ENCODE measurements at regions of chr4 and their contacts with region 1.

Region 1: GRCh38 chr4:138090150-138090917 is 151.8 kb downstream of the SLC7A11 start:
- DNase-seq: peak; percentile 46 to 60
- H3K4me3 ChIP-seq: peak overlapping the region in 1 of 3 donors; percentile 2
- H3K27ac ChIP-seq: no peak overlapping the region
- H3K4me1 ChIP-seq: no peaks in the 10 kb centered on the region
- H3K27me3 ChIP-seq: no peaks in the 10 kb centered on the region
- CTCF ChIP-seq: peak; percentile 61 to 86 (median 76)
- POLR2A ChIP-seq: no peak

Region 2: DNA sequence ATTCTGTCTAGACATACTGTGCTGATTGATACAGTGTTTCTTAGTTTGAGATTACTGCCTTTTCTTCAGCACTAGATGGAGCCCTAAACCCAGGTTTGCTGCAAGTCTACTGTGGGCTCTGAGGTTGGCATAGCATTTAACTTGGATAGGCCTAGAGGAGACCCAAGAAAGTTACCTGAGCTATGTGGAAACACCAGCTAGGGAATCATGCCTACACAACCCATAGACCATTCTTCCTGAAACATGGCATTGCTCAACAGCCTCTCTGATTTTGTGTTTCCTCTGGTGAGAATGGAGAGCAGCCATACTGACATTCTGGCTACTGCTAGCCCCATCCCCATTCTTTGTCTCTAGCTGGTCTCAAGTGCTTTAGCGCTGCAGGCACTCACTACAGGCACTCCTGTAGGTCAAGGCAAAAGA is 270.4 kb before region 1 on chr4:
- intact Hi-C with region 1: loop called (anchors 10 kb)
- DNase-seq: peak; percentile 8 to 29
- H3K4me3 ChIP-seq: no peak overlapping the region
- H3K27ac ChIP-seq: no peak overlapping the region
- H3K4me1 ChIP-seq: no peaks in the 10 kb centered on the region
- H3K27me3 ChIP-seq: no peaks in the 10 kb centered on the region
- CTCF ChIP-seq: peak in 4 of 6 experiments; percentile 58 to 73 (median 68)
- POLR2A ChIP-seq: no peak

Region 3: DNA sequence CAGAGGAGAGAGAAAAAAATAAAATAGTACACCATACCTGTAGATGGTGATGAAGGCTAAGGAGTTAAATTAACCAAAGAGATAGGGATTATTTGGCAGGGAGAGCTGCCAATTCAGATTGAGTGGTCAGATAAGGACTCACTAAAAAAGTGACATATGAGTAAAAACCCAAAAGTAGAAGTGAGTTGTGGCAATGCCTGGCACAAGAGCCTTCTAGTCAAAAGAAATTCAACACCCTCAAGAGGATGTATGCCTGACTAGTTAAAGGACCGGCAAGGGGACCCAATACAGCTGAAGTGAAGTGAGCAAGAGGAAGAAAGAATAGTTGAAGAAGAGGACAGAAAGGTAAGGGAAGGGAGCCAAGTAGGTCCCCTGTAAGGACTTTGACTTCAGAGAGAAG is 1051.8 kb after region 1 on chr4:
- intact Hi-C with region 1: no loop called
- DNase-seq: peak in 1 of 2 donors; percentile 7
- H3K4me3 ChIP-seq: no peak overlapping the region
- H3K27ac ChIP-seq: no peak overlapping the region
- H3K4me1 ChIP-seq: peaks cover 16 to 49% of the 10 kb centered on the region in 2 donors
- H3K27me3 ChIP-seq: no peaks in the 10 kb centered on the region
- CTCF ChIP-seq: no peak
- POLR2A ChIP-seq: no peak

Measured in thyroid gland (tissue), 4 donors.